ENCODE measurements at regions of chr20 and their contacts with region 1.

Region 1: GRCh38 chr20:33291830-33292355 is 8.9 kb downstream of the BPIFB1 start:
- DNase-seq: no peak
- ATAC-seq: no peak
- H3K4me3 ChIP-seq: no peak overlapping the region
- H3K27ac ChIP-seq: no peak overlapping the region
- H3K4me1 ChIP-seq: no peaks in the 10 kb centered on the region
- H3K27me3 ChIP-seq: peaks cover 0 to 67% (median 29%) of the 10 kb centered on the region in 7 donors
- CTCF ChIP-seq: peak; percentile 34 to 95 (median 70)

Region 2: DNA sequence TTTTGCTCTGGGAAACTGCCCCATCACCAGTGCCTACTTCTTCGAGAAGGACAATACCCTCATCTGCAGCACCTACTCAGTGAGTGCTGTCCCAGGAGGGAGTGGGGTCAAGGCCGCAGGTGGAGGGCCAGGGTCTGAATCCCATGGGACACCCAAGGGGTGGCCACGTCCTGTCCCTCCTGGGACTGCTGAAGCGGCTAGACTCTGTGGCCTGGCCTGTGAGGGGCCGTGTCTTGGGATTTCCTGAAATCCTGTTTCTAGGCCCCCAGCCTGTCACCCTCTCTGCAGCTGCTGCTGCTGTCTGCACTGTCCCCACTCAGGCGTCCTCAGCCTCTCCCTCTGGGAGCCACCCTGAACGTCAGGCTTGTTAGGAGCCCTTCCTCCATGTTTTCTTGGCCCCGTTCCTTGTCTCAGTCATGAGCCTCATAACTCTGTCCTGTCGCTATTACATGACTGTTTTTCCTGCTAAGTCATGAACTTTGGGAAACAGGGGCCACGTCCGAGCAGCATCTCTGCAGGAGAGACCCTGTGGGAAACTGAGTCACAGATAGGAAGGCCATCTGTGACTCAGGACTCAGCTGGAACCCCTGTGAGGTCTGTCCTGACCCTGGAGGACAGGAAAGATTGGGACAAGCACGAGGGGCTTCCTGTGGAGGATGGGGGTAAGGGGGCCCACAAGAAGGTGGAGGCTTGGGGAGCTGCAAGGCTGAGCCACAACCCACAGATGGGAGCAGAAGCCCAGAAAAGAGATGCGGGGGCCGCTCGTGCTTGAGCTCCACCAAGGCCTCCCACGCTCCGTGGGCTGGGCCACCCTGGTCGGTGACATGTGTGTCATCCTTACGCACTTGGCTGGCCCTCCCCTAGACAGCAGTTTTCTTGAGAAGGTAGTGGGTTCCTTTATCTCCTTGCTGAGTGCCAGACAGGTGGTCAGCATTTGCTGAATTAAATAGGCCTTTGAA is 383.3 kb before region 1 on chr20:
- intact Hi-C with region 1: loop called in 8 of 10 experiments (anchors 2 to 10 kb)
- DNase-seq: no peak
- ATAC-seq: no peak
- H3K4me3 ChIP-seq: no peak overlapping the region
- H3K27ac ChIP-seq: no peak overlapping the region
- H3K4me1 ChIP-seq: no peaks in the 10 kb centered on the region
- H3K27me3 ChIP-seq: peaks cover 0 to 6% (median 0%) of the 10 kb centered on the region in 7 donors
- CTCF ChIP-seq: no peak

Region 3: GRCh38 chr20:33178726-33179125 is 113.2 kb before region 1 on chr20:
- intact Hi-C with region 1: no loop called
- DNase-seq: no peak
- ATAC-seq: no peak
- H3K4me3 ChIP-seq: no peak overlapping the region
- H3K27ac ChIP-seq: no peak overlapping the region
- H3K4me1 ChIP-seq: no peaks in the 10 kb centered on the region
- H3K27me3 ChIP-seq: peaks cover 0 to 6% (median 0%) of the 10 kb centered on the region in 7 donors
- CTCF ChIP-seq: no peak

Region 4: GRCh38 chr20:33211817-33212424 is 80.0 kb before region 1 on chr20:
- intact Hi-C with region 1: no loop called
- DNase-seq: no peak
- ATAC-seq: no peak
- H3K4me3 ChIP-seq: no peak overlapping the region
- H3K27ac ChIP-seq: no peak overlapping the region
- H3K4me1 ChIP-seq: no peaks in the 10 kb centered on the region
- H3K27me3 ChIP-seq: peaks cover 0 to 47% (median 27%) of the 10 kb centered on the region in 7 donors
- CTCF ChIP-seq: peak in 6 of 9 donors; percentile 12 to 31 (median 19)

Region 5: DNA sequence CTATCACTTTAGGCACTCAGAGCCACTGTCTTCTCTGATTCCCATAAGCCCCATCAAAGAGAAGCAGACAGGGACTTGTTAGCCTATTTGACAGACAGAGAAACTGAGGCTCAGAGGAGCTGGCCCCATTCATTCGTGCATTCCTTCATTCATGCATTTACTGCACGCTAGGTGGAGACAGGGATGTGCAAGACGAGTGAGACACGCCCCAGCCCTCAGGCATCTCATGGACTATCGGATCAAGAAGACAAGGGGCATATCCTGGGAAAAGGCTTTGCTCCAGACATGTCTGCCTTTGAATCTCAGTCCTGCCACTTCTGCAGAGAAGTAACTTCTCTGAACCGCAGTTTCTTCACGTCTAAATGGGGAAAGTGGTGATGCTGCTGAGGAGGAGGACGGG is 45.2 kb after region 1 on chr20:
- intact Hi-C with region 1: no loop called
- DNase-seq: no peak
- ATAC-seq: no peak
- H3K4me3 ChIP-seq: no peak overlapping the region
- H3K27ac ChIP-seq: no peak overlapping the region
- H3K4me1 ChIP-seq: no peaks in the 10 kb centered on the region
- H3K27me3 ChIP-seq: peaks cover 0 to 39% (median 8%) of the 10 kb centered on the region in 7 donors
- CTCF ChIP-seq: no peak

Measured in heart right ventricle (tissue), 16 donors.